ENCODE measurements at regions of chr3 and their contacts with region 1.

Region 1: GRCh38 chr3:19702416-19703078 is 231.5 kb downstream of the EFHB start:
- DNase-seq: no peak
- H3K27ac ChIP-seq: no peak overlapping the region
- CTCF ChIP-seq: no peak

Region 2: GRCh38 chr3:20141851-20142250 is 439.3 kb after region 1 on chr3:
- CTCF ChIA-PET with region 1: no interaction called
- POLR2A ChIA-PET with region 1: no interaction called
- DNase-seq: no peak
- H3K27ac ChIP-seq: no peak overlapping the region
- CTCF ChIP-seq: no peak

Region 3: DNA sequence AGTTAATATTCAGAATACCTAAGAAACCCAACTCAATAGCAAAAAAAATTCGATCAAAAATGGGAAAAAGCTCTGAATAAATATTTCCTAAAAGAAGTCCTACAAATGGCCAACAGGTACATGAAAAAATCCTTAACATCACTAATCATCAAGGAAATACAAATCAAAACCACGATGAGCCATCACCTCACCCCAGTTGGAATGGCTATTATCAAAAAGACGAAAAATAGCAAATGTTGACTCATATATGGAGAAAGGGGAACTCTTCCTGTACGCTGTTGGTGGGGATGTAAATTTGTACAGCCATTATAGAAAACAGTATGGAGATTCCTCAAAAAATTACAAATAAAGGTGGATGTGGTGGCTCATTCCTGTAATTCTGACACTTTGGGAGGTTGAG is 513.1 kb after region 1 on chr3:
- CTCF ChIA-PET with region 1: interaction called, 10 read pairs
- POLR2A ChIA-PET with region 1: no interaction called
- DNase-seq: no peak
- H3K27ac ChIP-seq: no peak overlapping the region
- CTCF ChIP-seq: no peak